HCT116 (cell line): ENCODE measurements at regions of chr1 and their contacts with region 1.

Region 1: DNA sequence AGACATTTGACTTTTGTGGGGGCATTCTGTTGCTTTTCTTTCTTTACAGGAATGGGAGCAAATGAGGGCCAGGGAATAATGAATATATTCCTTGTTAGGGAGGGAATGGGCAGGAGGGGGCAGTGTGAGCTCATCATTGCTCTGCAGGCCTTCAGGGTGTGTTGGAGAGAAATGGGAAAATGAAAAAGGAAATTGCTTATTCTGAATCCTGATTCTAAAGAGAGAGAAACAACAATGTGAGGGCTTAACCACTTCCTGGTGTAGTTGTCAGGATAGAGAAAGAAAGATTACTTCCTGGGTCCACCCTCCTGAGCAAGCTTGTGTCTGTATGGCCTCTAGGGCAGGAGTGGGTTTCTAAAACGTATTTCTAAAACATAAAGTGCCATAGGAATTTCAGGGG is 28.3 kb downstream of the VANGL2 start:
- DNase-seq: peak; percentile 16
- ATAC-seq: peak; percentile 88
- H3K4me3 ChIP-seq: no peak overlapping the region
- H3K27ac ChIP-seq: no peak overlapping the region
- H3K4me1 ChIP-seq: peaks cover 0 to 4% of the 10 kb centered on the region in 2 experiments; a peak in 1 of 4 replicates
- H3K27me3 ChIP-seq: no peaks in the 10 kb centered on the region
- CTCF ChIP-seq: peak; percentile 58 to 91 (median 75)
- POLR2A ChIP-seq: no peak
- RAD21 ChIP-seq: peak; percentile 94

Region 2: GRCh38 chr1:160607011-160607671 is 178.5 kb after region 1 on chr1:
- CTCF ChIA-PET with region 1: interaction called, 19 read pairs
- POLR2A ChIA-PET with region 1: no interaction called
- RAD21 ChIA-PET with region 1: interaction called in 1 of 2 experiments, 5 read pairs
- intact Hi-C with region 1: loop called (anchors 1 kb)
- DNase-seq: peak; percentile 68
- ATAC-seq: peak; percentile 92
- H3K4me3 ChIP-seq: no peak overlapping the region
- H3K27ac ChIP-seq: no peak overlapping the region
- H3K4me1 ChIP-seq: no peaks in the 10 kb centered on the region
- H3K27me3 ChIP-seq: peaks cover 34% of the 10 kb centered on the region; the same call in 1 of the 2 replicates
- CTCF ChIP-seq: peak; percentile 65 to 90 (median 87)
- POLR2A ChIP-seq: no peak
- RAD21 ChIP-seq: peak; percentile 91

Region 3: GRCh38 chr1:160675641-160676410 is 247.2 kb after region 1 on chr1:
- CTCF ChIA-PET with region 1: interaction called, 10 read pairs
- POLR2A ChIA-PET with region 1: interaction called, 3 read pairs
- RAD21 ChIA-PET with region 1: no interaction called
- intact Hi-C with region 1: loop called (anchors 5 kb)
- DNase-seq: peak; percentile 57
- ATAC-seq: peak; percentile 98
- H3K4me3 ChIP-seq: no peak overlapping the region
- H3K27ac ChIP-seq: no peak overlapping the region
- H3K4me1 ChIP-seq: peaks cover 0 to 8% of the 10 kb centered on the region in 2 experiments; a peak in 2 of 4 replicates
- H3K27me3 ChIP-seq: no peaks in the 10 kb centered on the region
- CTCF ChIP-seq: peak; percentile 72 to 93 (median 91)
- POLR2A ChIP-seq: no peak
- RAD21 ChIP-seq: peak; percentile 73

Region 4: DNA sequence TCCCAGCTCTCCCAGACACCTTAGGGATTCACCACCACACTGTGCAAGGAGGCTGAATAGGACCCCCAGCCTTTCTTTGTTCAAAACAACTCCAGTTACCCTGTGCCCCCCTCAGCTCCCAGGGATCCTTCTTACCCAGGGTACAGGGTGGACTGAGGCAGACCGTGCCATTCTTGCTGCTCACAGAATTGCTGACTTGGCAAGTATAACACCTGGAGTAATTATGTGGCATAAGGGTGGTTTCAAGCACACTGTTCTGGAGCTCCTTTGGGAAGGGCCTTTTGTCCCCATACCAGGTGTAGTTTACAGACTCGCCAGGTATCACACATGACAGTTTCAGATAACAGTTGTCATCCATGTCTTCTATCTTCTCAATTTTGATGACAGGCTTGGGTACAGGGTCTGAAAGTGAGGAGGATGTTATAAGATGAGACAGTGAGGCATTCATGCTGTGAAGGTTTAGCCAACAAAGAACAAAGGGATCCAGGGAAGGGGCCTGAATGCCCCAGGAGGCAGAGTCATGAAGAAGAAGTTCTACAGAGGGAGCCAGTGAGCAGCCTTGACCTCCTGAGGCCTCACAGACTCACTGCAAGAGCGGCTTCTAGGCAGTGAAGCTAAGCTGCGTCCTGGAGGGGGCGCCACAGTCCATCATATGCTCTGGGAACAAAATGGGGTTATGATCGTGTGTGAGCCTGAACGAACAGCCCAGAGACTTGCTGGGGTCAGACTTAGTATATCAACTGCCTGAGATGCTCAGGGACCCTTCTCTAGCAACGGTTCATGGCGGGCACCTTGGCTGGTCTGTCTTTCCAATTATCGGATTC is 252.6 kb after region 1 on chr1:
- CTCF ChIA-PET with region 1: interaction called, 10 read pairs
- POLR2A ChIA-PET with region 1: no interaction called
- RAD21 ChIA-PET with region 1: no interaction called
- intact Hi-C with region 1: loop called (anchors 5 kb)
- DNase-seq: peak; percentile 78
- ATAC-seq: peak; percentile 99
- H3K4me3 ChIP-seq: no peak overlapping the region
- H3K27ac ChIP-seq: no peak overlapping the region
- H3K4me1 ChIP-seq: no peaks in the 10 kb centered on the region
- H3K27me3 ChIP-seq: no peaks in the 10 kb centered on the region
- CTCF ChIP-seq: peak; percentile 88 to 98 (median 95)
- POLR2A ChIP-seq: no peak
- RAD21 ChIP-seq: peak; percentile 89

Region 5: GRCh38 chr1:160830321-160831153 is 401.9 kb after region 1 on chr1:
- CTCF ChIA-PET with region 1: no interaction called
- POLR2A ChIA-PET with region 1: no interaction called
- RAD21 ChIA-PET with region 1: no interaction called
- intact Hi-C with region 1: loop called (anchors 5 kb)
- DNase-seq: peak; percentile 53
- ATAC-seq: peak; percentile 97
- H3K4me3 ChIP-seq: no peak overlapping the region
- H3K27ac ChIP-seq: no peak overlapping the region
- H3K4me1 ChIP-seq: 0 out of 4 replicates have a peak, but pooled peaks cover 0 to 3% of the 10 kb centered on the region in 2 experiments
- H3K27me3 ChIP-seq: peaks cover 5% of the 10 kb centered on the region; the same call in 1 of the 2 replicates
- CTCF ChIP-seq: peak; percentile 78 to 91 (median 87)
- POLR2A ChIP-seq: no peak
- RAD21 ChIP-seq: peak; percentile 70